ENCODE measurements at regions of chr5 and their contacts with region 1.

Region 1: DNA sequence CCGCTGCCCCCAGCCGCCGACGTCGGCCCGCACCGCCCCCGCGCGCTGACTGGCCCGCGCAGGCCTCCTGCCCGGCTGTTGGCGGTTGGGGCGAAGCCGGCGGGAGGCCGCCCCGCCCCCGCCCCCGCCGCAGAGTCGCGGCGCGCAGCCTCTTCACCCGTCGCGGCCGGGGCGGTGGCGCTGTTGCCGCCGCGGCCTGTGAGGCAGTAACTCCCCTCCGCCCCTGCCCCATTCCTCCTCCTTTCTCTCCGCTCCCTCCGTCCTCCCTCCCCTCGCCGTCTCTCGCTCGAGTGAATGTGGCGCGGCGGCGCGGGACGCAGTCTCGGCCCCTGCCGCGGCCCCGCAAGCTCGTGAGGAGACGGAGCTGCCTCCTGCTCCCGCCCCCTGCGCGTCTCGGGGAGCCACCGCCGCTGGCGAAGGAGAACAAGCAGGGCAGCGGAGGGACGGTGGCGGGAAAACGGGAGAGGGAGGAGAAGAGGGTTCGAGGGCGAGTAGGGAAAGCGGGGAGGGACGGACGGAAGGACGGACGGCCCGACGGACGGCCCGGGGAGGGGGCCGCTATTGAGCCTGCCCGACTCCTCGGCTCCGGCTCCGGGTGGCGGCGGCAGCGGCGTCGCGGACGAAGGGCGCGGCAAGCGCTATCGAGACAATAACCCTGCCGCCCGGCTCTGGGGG is 637 bp upstream of the ERBIN start:
- DNase-seq: peak; percentile 75
- H3K4me3 Mint-ChIP-seq: peak overlapping the region; percentile 87
- H3K27ac Mint-ChIP-seq: peak overlapping the region; percentile 88
- H3K4me1 Mint-ChIP-seq: peaks cover 18% of the 10 kb centered on the region
- H3K27me3 Mint-ChIP-seq: peaks cover 29% of the 10 kb centered on the region

Region 2: GRCh38 chr5:65562731-65563701 is 362.7 kb before region 1 on chr5 and contains the starts of genes CENPK and PPWD1:
- intact Hi-C with region 1: loop called (anchors 1 kb)
- DNase-seq: peak; percentile 95
- H3K4me3 Mint-ChIP-seq: peak within 1 kb of the TSS; percentile 91
- H3K27ac Mint-ChIP-seq: peak within 1 kb of the TSS; percentile 97
- H3K4me1 Mint-ChIP-seq: peaks cover 48% of the 10 kb centered on the region
- H3K27me3 Mint-ChIP-seq: no peaks in the 10 kb centered on the region
- total RNA-seq, gene CENPK: 78.0 and 79.2 TPM in 2 replicates
- total RNA-seq, gene PPWD1: 51.9 and 53.8 TPM in 2 replicates

Region 3: DNA sequence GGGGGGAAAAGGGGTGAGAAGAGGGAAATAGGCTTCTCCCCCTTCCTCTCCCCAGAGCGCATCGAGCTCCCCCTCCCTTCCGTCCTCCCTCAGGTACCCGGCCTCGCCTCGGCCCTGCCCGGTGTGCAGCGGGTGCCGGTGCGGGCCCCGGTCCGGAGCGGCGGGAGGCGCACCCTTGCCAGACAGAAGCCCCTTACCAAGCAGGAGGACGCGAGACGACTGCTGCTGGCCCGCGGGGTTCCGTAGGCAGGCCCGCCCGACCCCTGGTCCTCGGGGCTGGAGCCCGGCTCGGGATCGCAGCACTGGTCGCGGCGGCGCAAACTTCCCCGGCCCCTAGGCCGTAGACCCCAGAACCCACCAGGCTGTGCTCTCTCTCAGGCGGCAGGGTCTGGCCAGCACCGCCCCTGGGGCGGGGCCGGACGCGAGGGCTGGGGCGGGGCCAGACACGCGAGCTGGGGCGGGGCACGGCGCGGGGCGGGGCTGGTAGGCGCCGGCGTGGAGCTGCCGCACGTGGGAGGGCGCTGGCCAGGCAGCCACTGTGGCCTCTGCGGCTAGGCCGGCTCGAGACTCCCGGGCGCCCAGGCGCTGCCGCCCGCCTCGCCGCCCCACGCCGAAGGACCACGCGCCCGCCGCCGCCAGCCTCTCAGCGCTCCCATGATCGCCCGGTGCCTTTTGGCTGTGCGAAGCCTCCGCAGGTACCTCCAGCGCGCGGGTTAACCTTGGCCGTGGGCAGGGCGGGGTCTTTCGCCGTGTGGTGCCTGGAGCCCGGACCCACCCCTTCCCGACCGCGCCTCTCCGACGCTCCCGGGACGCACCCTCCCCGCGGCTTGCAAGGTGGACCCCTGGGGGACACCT is 203.8 kb before region 1 on chr5 and contains the starts of genes NLN and SGTB:
- intact Hi-C with region 1: loop called (anchors 2 kb)
- DNase-seq: peak; percentile 79
- H3K4me3 Mint-ChIP-seq: peak within 1 kb of the TSS; percentile 93
- H3K27ac Mint-ChIP-seq: peak within 1 kb of the TSS; percentile 88
- H3K4me1 Mint-ChIP-seq: peaks cover 29% of the 10 kb centered on the region
- H3K27me3 Mint-ChIP-seq: no peaks in the 10 kb centered on the region
- total RNA-seq, gene NLN: 22.5 and 22.8 TPM in 2 replicates
- total RNA-seq, gene SGTB: 7.6 TPM in 2 replicates

Region 4: DNA sequence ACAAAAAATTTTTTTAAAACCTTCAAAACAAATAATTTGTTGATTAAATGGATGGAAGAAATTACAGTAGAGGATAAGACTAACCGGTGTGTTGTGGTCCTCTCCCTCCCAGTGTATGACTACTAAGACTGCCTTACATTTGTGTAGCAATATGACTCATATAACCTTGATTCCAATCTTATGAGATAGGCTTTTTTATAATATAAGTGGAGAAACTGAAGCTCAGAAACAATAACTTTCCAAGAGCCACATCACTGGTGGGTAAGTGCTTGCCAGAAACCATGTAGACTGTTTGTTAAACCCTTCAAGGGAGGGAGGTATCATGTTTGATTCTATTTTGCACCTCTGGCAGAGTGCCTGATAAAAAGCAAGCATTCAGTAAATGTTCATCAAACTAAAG is 156.2 kb before region 1 on chr5:
- intact Hi-C with region 1: loop called (anchors 2 kb)
- DNase-seq: no peak
- H3K4me3 Mint-ChIP-seq: no peak overlapping the region
- H3K27ac Mint-ChIP-seq: peak overlapping the region; percentile 60
- H3K4me1 Mint-ChIP-seq: peaks cover 26% of the 10 kb centered on the region
- H3K27me3 Mint-ChIP-seq: no peaks in the 10 kb centered on the region

Region 5: GRCh38 chr5:65880496-65881072 is 45.2 kb before region 1 on chr5:
- intact Hi-C with region 1: loop called (anchors 2 kb)
- DNase-seq: no peak
- H3K4me3 Mint-ChIP-seq: no peak overlapping the region
- H3K27ac Mint-ChIP-seq: no peak overlapping the region
- H3K4me1 Mint-ChIP-seq: peaks cover 2% of the 10 kb centered on the region
- H3K27me3 Mint-ChIP-seq: no peaks in the 10 kb centered on the region

Region 6: GRCh38 chr5:65970481-65971367 is 45.0 kb after region 1 on chr5:
- intact Hi-C with region 1: no loop called
- DNase-seq: no peak
- H3K4me3 Mint-ChIP-seq: no peak overlapping the region
- H3K27ac Mint-ChIP-seq: no peak overlapping the region
- H3K4me1 Mint-ChIP-seq: peaks cover 28% of the 10 kb centered on the region
- H3K27me3 Mint-ChIP-seq: no peaks in the 10 kb centered on the region

Region 7: GRCh38 chr5:66074901-66075300 is 149.2 kb after region 1 on chr5:
- intact Hi-C with region 1: loop called (anchors 5 kb)
- DNase-seq: no peak
- H3K4me3 Mint-ChIP-seq: no peak overlapping the region
- H3K27ac Mint-ChIP-seq: no peak overlapping the region
- H3K4me1 Mint-ChIP-seq: peaks cover 6% of the 10 kb centered on the region
- H3K27me3 Mint-ChIP-seq: no peaks in the 10 kb centered on the region

Region 8: GRCh38 chr5:66171349-66172344 is 245.9 kb after region 1 on chr5:
- intact Hi-C with region 1: loop called (anchors 5 kb)
- DNase-seq: peak; percentile 29
- H3K4me3 Mint-ChIP-seq: no peak overlapping the region
- H3K27ac Mint-ChIP-seq: peak overlapping the region; percentile 28
- H3K4me1 Mint-ChIP-seq: peaks cover 28% of the 10 kb centered on the region
- H3K27me3 Mint-ChIP-seq: no peaks in the 10 kb centered on the region